CD8-positive, alpha-beta T cell (primary cell): ENCODE measurements at regions of chr11 and their contacts with region 1.

Region 1: GRCh38 chr11:67265633-67266423 is 445 bp upstream of the GRK2 start:
- DNase-seq: peak; percentile 56 to 91 (median 79)
- ATAC-seq: peak; percentile 35
- H3K4me3 ChIP-seq: no peak overlapping the region
- H3K4me3 Mint-ChIP-seq: peak overlapping the region; percentile 81
- H3K27ac ChIP-seq: peak overlapping the region in 1 of 2 experiments; percentile 51
- H3K27ac Mint-ChIP-seq: peak overlapping the region; percentile 86
- H3K4me1 ChIP-seq: peaks cover 61% of the 10 kb centered on the region
- H3K4me1 Mint-ChIP-seq: peaks cover 69% of the 10 kb centered on the region
- H3K27me3 ChIP-seq: peaks cover 0 to 4% of the 10 kb centered on the region in 2 experiments
- H3K27me3 Mint-ChIP-seq: no peaks in the 10 kb centered on the region
- CTCF ChIP-seq: peak; percentile 67

Region 2: DNA sequence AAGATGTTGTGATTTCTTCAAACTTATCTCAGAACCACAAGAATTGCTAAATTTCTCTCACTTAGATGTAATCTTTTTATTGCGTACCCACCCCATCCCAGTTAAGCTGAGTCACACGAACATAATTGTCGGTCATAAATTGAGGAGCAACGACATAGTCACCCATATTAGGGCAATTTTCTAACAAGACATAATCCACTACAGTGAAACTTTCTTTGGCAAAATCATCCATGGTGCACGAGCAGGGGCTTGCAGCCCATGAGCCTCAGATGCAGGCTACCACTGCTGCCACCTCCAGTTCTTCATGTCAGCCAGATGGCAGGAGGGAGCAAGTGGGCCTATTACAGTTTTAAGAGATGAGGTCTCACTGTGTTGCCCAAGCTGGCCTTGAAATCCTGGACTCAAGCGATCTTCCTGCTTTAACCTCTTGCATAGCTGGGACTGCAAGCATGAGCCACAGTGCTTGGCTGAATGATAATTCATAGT is 69.8 kb before region 1 on chr11:
- CTCF ChIA-PET with region 1: no interaction called
- POLR2A ChIA-PET with region 1: no interaction called
- intact Hi-C with region 1: no loop called
- DNase-seq: no peak
- ATAC-seq: no peak
- H3K4me3 ChIP-seq: no peak overlapping the region
- H3K4me3 Mint-ChIP-seq: no peak overlapping the region
- H3K27ac ChIP-seq: no peak overlapping the region
- H3K27ac Mint-ChIP-seq: no peak overlapping the region
- H3K4me1 ChIP-seq: no peaks in the 10 kb centered on the region
- H3K4me1 Mint-ChIP-seq: no peaks in the 10 kb centered on the region
- H3K27me3 ChIP-seq: no peaks in the 10 kb centered on the region
- H3K27me3 Mint-ChIP-seq: no peaks in the 10 kb centered on the region
- CTCF ChIP-seq: no peak

Region 3: GRCh38 chr11:67230406-67230805 is 35.4 kb before region 1 on chr11:
- CTCF ChIA-PET with region 1: no interaction called
- POLR2A ChIA-PET with region 1: no interaction called
- intact Hi-C with region 1: no loop called
- DNase-seq: no peak
- ATAC-seq: no peak
- H3K4me3 ChIP-seq: no peak overlapping the region
- H3K4me3 Mint-ChIP-seq: no peak overlapping the region
- H3K27ac ChIP-seq: peak overlapping the region in 1 of 2 experiments; percentile 30
- H3K27ac Mint-ChIP-seq: no peak overlapping the region
- H3K4me1 ChIP-seq: no peaks in the 10 kb centered on the region
- H3K4me1 Mint-ChIP-seq: peaks cover 18% of the 10 kb centered on the region
- H3K27me3 ChIP-seq: no peaks in the 10 kb centered on the region
- H3K27me3 Mint-ChIP-seq: no peaks in the 10 kb centered on the region
- CTCF ChIP-seq: no peak

Region 4: GRCh38 chr11:67252831-67253239 is 13.0 kb before region 1 on chr11:
- CTCF ChIA-PET with region 1: interaction called, 28 read pairs
- POLR2A ChIA-PET with region 1: no interaction called
- intact Hi-C with region 1: no loop called
- DNase-seq: peak in 4 of 9 experiments; percentile 37 to 74 (median 60)
- ATAC-seq: peak; percentile 76
- H3K4me3 ChIP-seq: no peak overlapping the region
- H3K4me3 Mint-ChIP-seq: no peak overlapping the region
- H3K27ac ChIP-seq: peak overlapping the region in 1 of 2 experiments; percentile 10
- H3K27ac Mint-ChIP-seq: peak overlapping the region; percentile 53
- H3K4me1 ChIP-seq: peaks cover 21% of the 10 kb centered on the region
- H3K4me1 Mint-ChIP-seq: peaks cover 37% of the 10 kb centered on the region
- H3K27me3 ChIP-seq: no peaks in the 10 kb centered on the region
- H3K27me3 Mint-ChIP-seq: no peaks in the 10 kb centered on the region
- CTCF ChIP-seq: peak; percentile 23

Region 5: DNA sequence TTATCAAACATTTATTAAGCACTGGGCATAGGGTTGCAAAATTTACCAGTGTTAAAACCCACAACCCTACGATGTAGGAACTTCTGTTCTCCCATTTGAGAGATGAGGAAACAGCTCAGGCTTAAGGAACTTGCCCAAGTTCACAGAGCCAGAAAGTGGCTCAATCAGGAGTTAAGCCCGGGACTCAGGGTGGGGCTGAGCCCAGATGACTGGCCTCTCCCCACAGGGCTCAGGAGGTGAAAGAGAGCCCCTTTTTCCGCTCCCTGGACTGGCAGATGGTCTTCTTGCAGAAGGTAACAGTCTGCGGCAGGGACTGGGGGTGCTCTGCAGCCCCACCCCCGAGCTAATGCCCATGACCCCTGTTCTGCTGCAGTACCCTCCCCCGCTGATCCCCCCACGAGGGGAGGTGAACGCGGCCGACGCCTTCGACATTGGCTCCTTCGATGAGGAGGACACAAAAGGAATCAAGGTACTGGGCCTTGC is 17.7 kb after region 1 on chr11:
- CTCF ChIA-PET with region 1: interaction called, 77 read pairs
- POLR2A ChIA-PET with region 1: interaction called, 426 read pairs
- intact Hi-C with region 1: loop called (anchors 1 kb)
- DNase-seq: peak in 1 of 9 experiments; percentile 12
- ATAC-seq: no peak
- H3K4me3 ChIP-seq: no peak overlapping the region
- H3K4me3 Mint-ChIP-seq: no peak overlapping the region
- H3K27ac ChIP-seq: no peak overlapping the region
- H3K27ac Mint-ChIP-seq: peak overlapping the region; percentile 55
- H3K4me1 ChIP-seq: peaks cover 85% of the 10 kb centered on the region
- H3K4me1 Mint-ChIP-seq: peaks cover 48% of the 10 kb centered on the region
- H3K27me3 ChIP-seq: no peaks in the 10 kb centered on the region
- H3K27me3 Mint-ChIP-seq: no peaks in the 10 kb centered on the region
- CTCF ChIP-seq: no peak

Region 6: DNA sequence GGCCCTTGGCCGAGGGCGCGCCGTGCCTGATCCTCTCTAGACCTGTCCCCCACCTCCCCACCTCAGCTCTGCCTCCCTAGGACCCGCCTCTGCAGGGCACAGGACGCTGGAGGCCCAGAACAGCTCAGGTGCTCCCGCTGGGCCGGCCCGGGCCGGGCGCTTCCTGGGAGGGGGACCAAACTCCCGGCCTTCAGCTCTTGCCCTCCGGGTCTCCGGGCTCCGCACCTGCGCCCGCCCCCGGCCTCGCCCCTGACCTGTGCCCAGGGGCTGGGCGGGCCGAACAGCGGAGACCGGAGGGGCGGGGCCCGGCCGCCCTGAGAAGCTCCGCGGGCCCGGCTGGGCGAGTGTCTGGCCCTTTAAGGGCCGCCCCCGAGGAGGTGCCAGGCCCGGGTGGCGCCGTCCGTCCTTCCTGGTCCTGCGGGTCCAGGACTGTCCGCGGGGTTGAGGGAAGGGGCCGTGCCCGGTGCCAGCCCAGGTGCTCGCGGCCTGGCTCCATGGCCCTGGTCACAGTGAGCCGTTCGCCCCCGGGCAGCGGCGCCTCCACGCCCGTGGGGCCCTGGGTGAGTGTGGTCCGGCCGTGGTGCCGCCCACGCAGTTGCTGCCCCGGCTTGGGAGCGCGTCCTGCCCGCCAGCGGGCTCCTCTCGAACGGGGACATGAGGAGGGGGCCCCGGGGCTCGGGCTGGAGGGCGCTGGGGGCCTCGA is 37.5 kb after region 1 on chr11 and contains the start of gene SSH3:
- CTCF ChIA-PET with region 1: interaction called, 17 read pairs
- POLR2A ChIA-PET with region 1: interaction called, 9 read pairs
- intact Hi-C with region 1: no loop called
- DNase-seq: peak in 8 of 9 experiments; percentile 19 to 72 (median 48)
- ATAC-seq: peak; percentile 72
- H3K4me3 ChIP-seq: peak within 1 kb of the TSS; percentile 61 to 63
- H3K4me3 Mint-ChIP-seq: peak within 1 kb of the TSS; percentile 72
- H3K27ac ChIP-seq: peak within 1 kb of the TSS; percentile 32 to 37
- H3K27ac Mint-ChIP-seq: peak within 1 kb of the TSS; percentile 72
- H3K4me1 ChIP-seq: peaks cover 20% of the 10 kb centered on the region
- H3K4me1 Mint-ChIP-seq: peaks cover 16% of the 10 kb centered on the region
- H3K27me3 ChIP-seq: no peaks in the 10 kb centered on the region
- H3K27me3 Mint-ChIP-seq: no peaks in the 10 kb centered on the region
- CTCF ChIP-seq: no peak
- total RNA-seq, gene SSH3: 5.9 to 9.9 TPM

Region 7: DNA sequence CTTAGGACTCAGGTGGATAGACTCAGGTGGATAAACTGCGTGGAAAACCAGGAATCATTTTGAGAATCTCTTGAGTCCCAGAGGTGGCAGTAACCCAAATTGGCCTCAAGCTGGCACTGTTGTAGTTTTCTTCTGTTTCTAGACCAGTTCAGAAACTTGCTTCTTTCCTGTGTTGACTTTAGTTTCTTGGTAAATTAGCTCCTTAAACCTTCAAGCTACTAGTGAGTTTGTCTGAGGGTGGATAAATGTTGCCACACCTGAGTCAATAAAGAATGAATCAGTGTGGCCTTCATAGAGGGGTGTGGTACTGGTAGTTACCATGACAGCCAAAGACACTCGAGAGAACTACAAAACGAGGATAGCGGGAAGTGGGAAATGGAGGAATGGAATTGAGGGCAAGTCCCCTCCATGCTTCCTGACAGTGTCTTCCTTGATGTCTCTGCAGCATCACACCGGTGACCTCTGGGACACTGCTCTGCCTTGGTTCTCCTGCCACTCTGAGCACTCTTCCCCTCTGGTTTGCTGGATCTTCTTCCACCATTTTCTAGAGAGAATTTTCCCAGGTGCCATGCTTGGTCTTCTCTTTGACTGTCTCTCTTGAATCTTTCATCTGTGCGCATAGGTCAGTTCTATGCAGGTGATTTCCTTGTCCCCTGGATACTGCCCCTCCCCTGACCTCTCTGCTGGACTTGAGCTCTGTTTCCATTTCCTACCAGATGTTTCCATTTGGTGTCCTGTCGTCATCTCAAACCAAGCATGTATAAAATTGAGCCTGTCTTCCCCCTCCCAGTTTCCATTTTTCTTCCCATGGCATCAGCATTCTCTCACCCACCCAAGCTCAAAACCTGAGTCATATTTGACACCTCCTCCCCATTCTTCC is 80.3 kb after region 1 on chr11:
- CTCF ChIA-PET with region 1: interaction called, 25 read pairs
- POLR2A ChIA-PET with region 1: interaction called, 3 read pairs
- intact Hi-C with region 1: no loop called
- DNase-seq: peak in 2 of 9 experiments; percentile 44 to 60
- ATAC-seq: peak; percentile 75
- H3K4me3 ChIP-seq: no peak overlapping the region
- H3K4me3 Mint-ChIP-seq: peak overlapping the region; percentile 42
- H3K27ac ChIP-seq: no peak overlapping the region
- H3K27ac Mint-ChIP-seq: peak overlapping the region; percentile 76
- H3K4me1 ChIP-seq: peaks cover 40% of the 10 kb centered on the region
- H3K4me1 Mint-ChIP-seq: peaks cover 53% of the 10 kb centered on the region
- H3K27me3 ChIP-seq: no peaks in the 10 kb centered on the region
- H3K27me3 Mint-ChIP-seq: no peaks in the 10 kb centered on the region
- CTCF ChIP-seq: peak; percentile 70

Region 8: GRCh38 chr11:67382276-67383136 is 116.7 kb after region 1 on chr11:
- CTCF ChIA-PET with region 1: interaction called, 42 read pairs
- POLR2A ChIA-PET with region 1: no interaction called
- intact Hi-C with region 1: loop called (anchors 1 kb)
- DNase-seq: peak; percentile 72 to 90 (median 86)
- ATAC-seq: peak; percentile 98
- H3K4me3 ChIP-seq: no peak overlapping the region
- H3K4me3 Mint-ChIP-seq: no peak overlapping the region
- H3K27ac ChIP-seq: no peak overlapping the region
- H3K27ac Mint-ChIP-seq: no peak overlapping the region
- H3K4me1 ChIP-seq: peaks cover 5% of the 10 kb centered on the region
- H3K4me1 Mint-ChIP-seq: peaks cover 5% of the 10 kb centered on the region
- H3K27me3 ChIP-seq: no peaks in the 10 kb centered on the region
- H3K27me3 Mint-ChIP-seq: no peaks in the 10 kb centered on the region
- CTCF ChIP-seq: peak; percentile 90